ENCODE measurements at regions of chr2 and their contacts with region 1.

Region 1: GRCh38 chr2:111900859-111901258 is 2.5 kb downstream of the MERTK start:
- DNase-seq: peak; percentile 60
- H3K4me3 ChIP-seq: no peak overlapping the region
- H3K27ac ChIP-seq: no peak overlapping the region
- H3K4me1 ChIP-seq: no peaks in the 10 kb centered on the region
- H3K27me3 ChIP-seq: peaks cover 62% of the 10 kb centered on the region

Region 2: DNA sequence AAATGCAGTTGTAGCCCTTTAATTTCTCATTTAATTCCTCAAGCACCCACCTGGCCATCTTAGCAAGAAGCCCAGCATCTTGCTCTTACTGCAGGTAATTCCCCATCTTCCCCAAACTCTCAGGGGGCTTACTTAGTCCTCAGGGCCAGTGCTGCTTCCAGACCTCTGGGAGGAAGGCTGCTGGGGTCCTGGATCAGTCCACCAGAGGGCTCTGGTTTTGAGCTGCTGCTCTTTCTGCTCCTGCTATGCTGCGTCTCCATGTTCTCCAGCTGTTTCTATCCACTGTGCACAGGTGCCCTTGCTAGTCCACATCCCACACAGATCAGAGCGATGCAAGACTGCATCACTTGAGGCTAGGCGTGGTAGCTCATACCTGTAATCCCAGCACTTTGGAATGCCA is 119.7 kb after region 1 on chr2:
- in situ Hi-C with region 1: no loop called
- DNase-seq: no peak
- H3K4me3 ChIP-seq: no peak overlapping the region
- H3K27ac ChIP-seq: no peak overlapping the region
- H3K4me1 ChIP-seq: no peaks in the 10 kb centered on the region
- H3K27me3 ChIP-seq: peaks cover 45% of the 10 kb centered on the region

Region 3: DNA sequence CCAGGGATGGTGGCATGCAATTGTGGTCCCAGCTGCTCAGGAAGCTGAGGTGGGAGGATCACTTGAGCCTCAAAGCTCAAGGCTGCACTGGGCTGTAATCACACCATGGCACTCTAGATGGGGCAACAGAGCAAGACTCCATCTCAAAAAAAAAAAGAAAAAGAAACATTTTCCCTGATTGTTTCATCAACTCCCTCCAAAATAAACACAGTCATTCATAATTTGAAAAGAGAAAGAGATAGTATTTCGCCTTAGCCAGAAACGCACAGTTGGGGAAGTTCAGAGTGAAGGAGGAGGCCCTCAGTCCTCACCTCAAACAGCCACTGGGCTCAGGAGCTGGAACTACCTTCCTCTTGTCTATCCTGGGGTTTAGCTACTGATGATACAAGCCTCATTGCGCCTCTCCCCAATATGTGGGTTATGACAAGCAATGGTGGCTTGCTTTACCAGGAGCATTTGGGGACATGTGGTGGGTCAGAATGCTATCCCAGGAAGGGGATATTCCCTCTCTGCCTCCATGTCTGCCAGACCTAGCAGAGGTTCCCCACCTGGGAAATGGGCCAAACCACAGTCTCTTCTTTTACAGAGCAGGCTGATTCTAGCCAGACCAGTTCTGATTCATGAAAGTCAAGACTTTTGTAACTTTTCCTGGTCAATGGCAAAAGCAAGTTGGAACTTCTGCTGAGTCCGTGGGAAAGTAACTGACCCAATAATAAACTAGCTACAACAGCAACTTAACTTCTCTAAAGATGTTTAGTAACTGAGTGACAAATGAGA is 132.0 kb after region 1 on chr2:
- in situ Hi-C with region 1: loop called (anchors 10 kb)
- DNase-seq: peak; percentile 78
- H3K4me3 ChIP-seq: no peak overlapping the region
- H3K27ac ChIP-seq: peak overlapping the region; percentile 3; the same call in 1 of the 2 replicates
- H3K4me1 ChIP-seq: peaks cover 19% of the 10 kb centered on the region
- H3K27me3 ChIP-seq: no peaks in the 10 kb centered on the region

Region 4: GRCh38 chr2:112181571-112182290 is 280.9 kb after region 1 on chr2:
- in situ Hi-C with region 1: no loop called
- DNase-seq: no peak
- H3K4me3 ChIP-seq: no peak overlapping the region
- H3K27ac ChIP-seq: no peak overlapping the region
- H3K4me1 ChIP-seq: no peaks in the 10 kb centered on the region
- H3K27me3 ChIP-seq: no peaks in the 10 kb centered on the region

Measured in GM23248 (cell line).